ENCODE measurements at regions of chr19 and their contacts with region 1.

Region 1: DNA sequence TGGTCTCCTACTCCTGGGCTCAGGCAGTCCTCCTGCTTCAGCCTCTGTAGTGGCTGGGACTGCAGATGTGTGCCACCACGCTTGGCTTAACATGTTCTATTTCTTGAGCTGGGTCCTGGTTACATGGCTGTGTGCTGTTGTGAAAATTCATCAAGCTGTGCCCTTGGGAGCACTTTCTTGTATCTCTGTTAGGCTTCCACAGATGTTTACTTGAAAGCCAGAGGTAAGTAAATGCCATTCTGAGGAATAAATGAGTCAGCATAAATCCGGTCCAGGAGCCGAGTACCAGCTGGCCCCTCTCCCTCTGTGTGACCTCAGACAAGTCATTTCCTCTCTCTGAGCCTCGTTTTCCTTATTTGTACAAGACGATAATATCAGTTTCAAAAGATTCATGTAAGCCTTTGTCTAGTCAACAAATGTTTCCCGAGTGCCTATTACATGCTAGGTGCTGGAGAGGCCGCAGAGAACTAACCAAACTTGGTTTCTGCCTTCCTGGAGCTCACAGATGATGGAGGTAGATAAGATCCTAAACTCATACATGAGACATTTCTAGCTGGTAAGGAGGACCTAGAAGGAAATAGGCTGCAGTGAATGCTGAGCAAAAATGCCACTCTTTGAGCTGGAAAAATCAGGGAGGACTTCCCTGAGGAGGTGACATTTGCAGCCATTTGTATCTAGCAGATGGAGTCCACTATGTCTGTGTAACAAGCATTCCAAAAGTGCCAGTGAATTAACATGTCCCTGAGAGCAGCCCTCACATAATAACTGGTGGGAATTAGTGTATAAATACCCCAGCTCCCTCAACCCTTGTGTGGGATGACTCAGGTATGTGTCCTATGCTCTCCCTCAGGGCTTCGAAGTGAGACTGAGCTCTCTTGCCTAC is 2.7 kb upstream of the RASAL3 start:
- DNase-seq: peak; percentile 56 to 89 (median 65)
- H3K4me3 ChIP-seq: no peak overlapping the region
- H3K4me3 Mint-ChIP-seq: peak overlapping the region; percentile 74 to 89 (median 78)
- H3K27ac ChIP-seq: peak overlapping the region; percentile 38
- H3K27ac Mint-ChIP-seq: peak overlapping the region; percentile 83 to 97 (median 91)
- H3K4me1 ChIP-seq: peaks cover 71% of the 10 kb centered on the region
- H3K4me1 Mint-ChIP-seq: peaks cover 38 to 74% (median 55%) of the 10 kb centered on the region in 4 donors
- H3K27me3 ChIP-seq: no peaks in the 10 kb centered on the region
- H3K27me3 Mint-ChIP-seq: no peaks in the 10 kb centered on the region

Region 2: GRCh38 chr19:15280915-15281683 is 186.0 kb before region 1 on chr19:
- CTCF ChIA-PET with region 1: no interaction called
- POLR2A ChIA-PET with region 1: no interaction called
- intact Hi-C with region 1: no loop called
- DNase-seq: no peak
- H3K4me3 ChIP-seq: no peak overlapping the region
- H3K4me3 Mint-ChIP-seq: peak overlapping the region in 4 of 8 donors; percentile 17 to 71 (median 50)
- H3K27ac ChIP-seq: no peak overlapping the region
- H3K27ac Mint-ChIP-seq: peak overlapping the region; percentile 39 to 89 (median 61)
- H3K4me1 ChIP-seq: peaks cover 90% of the 10 kb centered on the region
- H3K4me1 Mint-ChIP-seq: peaks cover 70 to 98% (median 85%) of the 10 kb centered on the region in 4 donors
- H3K27me3 ChIP-seq: no peaks in the 10 kb centered on the region
- H3K27me3 Mint-ChIP-seq: no peaks in the 10 kb centered on the region

Region 3: GRCh38 chr19:15340086-15340485 is 127.0 kb before region 1 on chr19:
- CTCF ChIA-PET with region 1: no interaction called
- POLR2A ChIA-PET with region 1: no interaction called
- intact Hi-C with region 1: no loop called
- DNase-seq: no peak
- H3K4me3 ChIP-seq: no peak overlapping the region
- H3K4me3 Mint-ChIP-seq: no peak overlapping the region
- H3K27ac ChIP-seq: no peak overlapping the region
- H3K27ac Mint-ChIP-seq: no peak overlapping the region
- H3K4me1 ChIP-seq: no peaks in the 10 kb centered on the region
- H3K4me1 Mint-ChIP-seq: no peaks in the 10 kb centered on the region
- H3K27me3 ChIP-seq: no peaks in the 10 kb centered on the region
- H3K27me3 Mint-ChIP-seq: no peaks in the 10 kb centered on the region

Region 4: DNA sequence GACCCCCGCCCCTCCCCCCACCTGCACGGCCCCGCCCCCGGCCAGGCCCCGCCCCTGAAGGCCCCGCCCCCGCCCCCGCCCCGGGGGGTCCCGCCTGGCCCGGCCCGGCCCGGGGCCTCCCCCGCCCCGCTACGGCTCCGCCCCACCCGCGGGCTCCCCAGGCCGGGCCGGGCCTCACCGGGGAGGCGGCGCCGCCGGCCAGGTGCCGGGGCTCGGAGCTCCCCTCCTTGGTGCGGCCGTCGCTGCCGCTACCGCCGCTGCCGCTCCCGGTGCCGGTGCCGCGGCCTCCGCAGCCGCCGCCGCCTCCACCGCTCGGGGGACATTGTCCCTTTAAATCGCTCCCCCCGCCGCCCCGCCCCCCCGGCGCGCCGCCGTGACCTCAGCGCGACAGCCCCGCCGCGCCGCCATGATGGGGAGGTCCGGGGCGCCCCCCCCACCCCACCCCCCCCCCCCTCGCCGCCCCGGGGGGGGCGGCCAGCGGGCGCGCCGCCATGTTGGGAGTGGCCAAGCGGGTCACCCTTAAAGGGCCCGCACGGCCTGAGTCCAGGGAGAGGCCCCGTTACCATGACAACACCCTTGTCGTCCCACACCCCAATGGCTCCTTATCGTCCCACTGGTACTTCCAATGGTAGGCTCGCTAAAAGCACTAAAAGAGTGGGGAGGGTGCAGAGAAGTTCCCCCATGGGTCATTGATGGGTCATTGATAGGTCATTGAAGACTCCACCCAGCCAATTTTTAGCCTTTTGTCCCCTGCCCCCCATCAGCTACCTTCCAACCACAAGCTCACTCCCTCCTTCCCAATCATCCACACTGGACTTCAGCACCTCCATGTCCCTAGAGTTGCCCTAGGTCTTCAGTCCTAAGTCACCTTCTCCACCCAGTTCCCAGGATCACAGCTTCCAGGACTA is 17.2 kb before region 1 on chr19 and contains the start of gene WIZ:
- CTCF ChIA-PET with region 1: interaction called, 5 read pairs
- POLR2A ChIA-PET with region 1: interaction called, 180 read pairs
- intact Hi-C with region 1: loop called (anchors 1 kb)
- DNase-seq: peak; percentile 83 to 90 (median 86)
- H3K4me3 ChIP-seq: peak within 1 kb of the TSS in 1 of 2 donors; percentile 63
- H3K4me3 Mint-ChIP-seq: peak within 1 kb of the TSS; percentile 79 to 91 (median 85)
- H3K27ac ChIP-seq: peak within 1 kb of the TSS; percentile 57
- H3K27ac Mint-ChIP-seq: peak within 1 kb of the TSS; percentile 89 to 98 (median 97)
- H3K4me1 ChIP-seq: peaks cover 21% of the 10 kb centered on the region
- H3K4me1 Mint-ChIP-seq: peaks cover 8 to 31% (median 24%) of the 10 kb centered on the region in 4 donors
- H3K27me3 ChIP-seq: no peaks in the 10 kb centered on the region
- H3K27me3 Mint-ChIP-seq: no peaks in the 10 kb centered on the region
- total RNA-seq, gene WIZ: 28.7 to 30.0 TPM

Region 5: DNA sequence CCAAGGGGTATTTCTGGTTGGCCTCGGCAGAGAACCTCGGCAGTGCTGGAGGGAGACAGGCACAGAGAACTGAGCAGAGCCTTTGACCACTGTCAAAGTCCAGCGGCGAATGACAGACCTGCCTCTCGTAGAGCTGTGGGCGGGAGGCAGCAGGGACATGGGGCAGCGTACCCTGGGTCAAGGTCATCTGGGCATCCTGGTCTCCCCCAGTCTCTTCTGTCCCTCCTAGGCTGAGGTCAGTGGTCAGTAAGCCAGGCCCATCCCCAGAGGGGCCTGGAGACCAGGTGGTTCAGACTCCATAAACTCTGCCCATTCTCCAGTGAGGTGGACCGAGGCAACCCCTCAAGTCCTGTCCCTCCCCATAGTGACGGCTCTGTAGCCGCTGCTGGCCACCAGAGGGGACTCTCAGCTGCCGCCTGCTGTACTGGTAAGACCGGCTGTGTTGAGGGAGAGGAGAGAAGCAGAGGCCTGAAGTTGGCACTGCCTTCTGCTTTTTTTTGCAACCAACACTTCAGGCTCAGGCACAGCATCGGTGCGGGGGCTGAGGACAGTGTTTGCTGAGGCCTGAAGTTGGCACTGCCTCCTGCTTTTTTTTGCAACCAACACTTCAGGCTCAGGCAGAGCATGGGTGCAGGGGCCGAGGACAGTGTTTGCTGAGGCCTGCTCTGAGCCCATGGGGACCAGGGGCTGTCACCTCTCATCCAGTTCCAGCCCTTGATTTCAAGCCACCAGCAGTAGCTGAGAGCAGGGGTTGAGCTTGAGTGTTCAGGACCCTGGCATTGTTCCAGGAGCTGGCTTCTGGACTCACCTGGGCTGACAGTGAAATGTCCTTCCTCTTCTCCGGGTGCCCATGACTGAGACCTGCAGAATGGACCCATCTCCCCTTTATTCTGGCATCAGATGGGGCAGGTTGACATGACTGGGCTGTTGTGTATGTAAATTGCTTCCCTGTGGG is 12.6 kb after region 1 on chr19 and contains the start of gene PGLYRP2:
- CTCF ChIA-PET with region 1: interaction called, 5 read pairs
- POLR2A ChIA-PET with region 1: interaction called, 19 read pairs
- intact Hi-C with region 1: no loop called
- DNase-seq: no peak
- H3K4me3 ChIP-seq: no peak within 1 kb of the TSS
- H3K4me3 Mint-ChIP-seq: peak within 1 kb of the TSS in 5 of 8 donors; percentile 19 to 69 (median 40)
- H3K27ac ChIP-seq: no peak within 1 kb of the TSS
- H3K27ac Mint-ChIP-seq: peak within 1 kb of the TSS in 5 of 7 donors; percentile 3 to 86 (median 41)
- H3K4me1 ChIP-seq: peaks cover 28% of the 10 kb centered on the region
- H3K4me1 Mint-ChIP-seq: peaks cover 11 to 52% (median 32%) of the 10 kb centered on the region in 4 donors
- H3K27me3 ChIP-seq: no peaks in the 10 kb centered on the region
- H3K27me3 Mint-ChIP-seq: no peaks in the 10 kb centered on the region
- total RNA-seq, gene PGLYRP2: 0.61 to 0.91 TPM

Region 6: DNA sequence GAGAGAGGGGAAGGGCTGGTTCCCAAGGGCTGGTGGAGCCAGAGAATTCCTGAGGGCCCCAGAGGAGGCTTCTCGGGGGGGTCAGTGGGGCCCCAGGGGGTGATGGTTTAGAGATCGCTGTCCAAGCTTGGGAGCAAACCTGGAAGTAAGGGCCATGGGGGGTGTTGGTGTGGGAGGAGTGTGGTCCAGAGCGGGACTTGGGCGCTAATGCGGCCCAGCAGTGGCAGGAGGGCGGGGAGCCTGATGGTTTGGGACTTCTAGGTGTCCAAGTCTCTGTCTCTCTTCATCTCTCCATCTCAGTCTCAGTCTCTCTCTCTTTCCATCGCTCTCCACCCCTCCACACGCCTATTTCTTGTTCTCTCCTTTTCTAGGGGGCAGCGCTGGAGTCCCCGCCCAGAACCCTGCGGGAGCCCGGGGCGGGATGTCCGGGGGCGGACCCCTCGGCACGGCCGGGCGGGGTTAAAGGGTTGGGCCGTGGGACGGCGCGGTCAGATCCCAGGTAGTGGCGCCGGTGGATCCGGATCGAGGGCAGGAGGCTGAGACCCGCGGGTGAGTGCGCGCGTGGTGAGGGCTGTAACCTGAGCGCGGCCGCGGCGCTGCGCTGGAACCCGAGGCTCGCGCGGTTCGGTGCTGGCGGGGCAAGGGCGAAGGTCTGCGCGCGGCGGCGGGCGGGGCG is 41.1 kb after region 1 on chr19 and contains the start of gene CYP4F22:
- CTCF ChIA-PET with region 1: interaction called, 4 read pairs
- POLR2A ChIA-PET with region 1: interaction called, 36 read pairs
- intact Hi-C with region 1: loop called (anchors 5 kb)
- DNase-seq: peak in 2 of 5 donors; percentile 15 to 25
- H3K4me3 ChIP-seq: peak within 1 kb of the TSS in 1 of 2 donors; percentile 41
- H3K4me3 Mint-ChIP-seq: peak within 1 kb of the TSS; percentile 84 to 88 (median 86)
- H3K27ac ChIP-seq: no peak within 1 kb of the TSS
- H3K27ac Mint-ChIP-seq: peak within 1 kb of the TSS in 6 of 7 donors; percentile 5 to 78 (median 26)
- H3K4me1 ChIP-seq: peaks cover 16% of the 10 kb centered on the region
- H3K4me1 Mint-ChIP-seq: peaks cover 13 to 26% (median 18%) of the 10 kb centered on the region in 4 donors
- H3K27me3 ChIP-seq: peaks cover 5% of the 10 kb centered on the region
- H3K27me3 Mint-ChIP-seq: peaks cover 1 to 3% of the 10 kb centered on the region in 2 donors
- total RNA-seq, gene CYP4F22: 0.44 to 0.61 TPM